ENCODE measurements at regions of chr17 and their contacts with region 1.

Region 1: DNA sequence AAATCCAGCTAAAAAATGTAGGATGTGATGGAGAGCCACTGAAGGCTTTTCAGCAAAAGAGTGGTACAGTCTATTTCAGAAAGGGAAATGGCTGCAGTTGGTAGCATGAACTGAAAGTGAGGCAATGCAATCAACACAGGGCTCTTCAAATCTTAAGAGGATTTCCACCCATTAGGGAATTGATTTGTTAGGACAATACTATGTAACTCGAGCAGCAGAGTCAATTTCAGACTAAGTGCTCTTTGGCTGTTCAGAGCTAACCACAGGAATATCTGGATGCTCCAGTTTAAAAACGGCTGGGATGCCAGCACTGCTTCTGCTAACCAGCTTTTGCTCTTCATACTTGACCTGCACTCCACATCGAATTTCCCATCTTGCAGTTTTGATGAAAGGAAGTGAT is 24.6 kb downstream of the CACNG1 start:
- DNase-seq: no peak
- H3K4me3 ChIP-seq: no peak overlapping the region
- H3K27ac ChIP-seq: no peak overlapping the region
- H3K4me1 ChIP-seq: no peaks in the 10 kb centered on the region
- H3K27me3 ChIP-seq: no peaks in the 10 kb centered on the region
- CTCF ChIP-seq: no peak

Region 2: DNA sequence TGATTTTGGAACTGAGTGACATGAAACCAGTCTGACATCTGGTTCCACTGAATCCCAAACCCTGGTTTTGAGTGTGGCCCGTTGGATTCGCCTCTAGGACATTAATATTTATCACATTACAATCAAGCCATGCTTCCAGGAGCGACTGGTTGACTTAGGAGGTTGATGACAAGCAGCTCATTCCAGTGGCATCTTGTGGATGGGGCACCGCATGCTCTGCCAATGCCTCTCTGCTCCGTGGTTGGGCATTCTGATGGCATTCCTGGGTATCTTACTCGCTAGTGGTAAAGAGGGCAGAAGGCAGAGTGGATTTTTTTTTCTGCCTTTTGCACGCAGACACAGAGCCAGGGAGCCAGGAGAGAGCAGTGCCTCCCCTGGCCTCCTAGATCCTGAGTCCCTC is 73.1 kb before region 1 on chr17:
- CTCF ChIA-PET with region 1: no interaction called
- dilution Hi-C with region 1: loop called (anchors 5 kb)
- in situ Hi-C with region 1: no loop called
- intact Hi-C with region 1: no loop called
- DNase-seq: no peak
- H3K4me3 ChIP-seq: no peak overlapping the region
- H3K27ac ChIP-seq: no peak overlapping the region
- H3K4me1 ChIP-seq: no peaks in the 10 kb centered on the region
- H3K27me3 ChIP-seq: no peaks in the 10 kb centered on the region
- CTCF ChIP-seq: no peak

Region 3: GRCh38 chr17:67082107-67082506 is 13.1 kb after region 1 on chr17:
- CTCF ChIA-PET with region 1: interaction called, 12 read pairs
- dilution Hi-C with region 1: no loop called
- in situ Hi-C with region 1: no loop called
- intact Hi-C with region 1: no loop called
- DNase-seq: no peak
- H3K4me3 ChIP-seq: no peak overlapping the region
- H3K27ac ChIP-seq: no peak overlapping the region
- H3K4me1 ChIP-seq: no peaks in the 10 kb centered on the region
- H3K27me3 ChIP-seq: no peaks in the 10 kb centered on the region
- CTCF ChIP-seq: no peak